ENCODE measurements at regions of chr14 and their contacts with region 1.

Region 1: GRCh38 chr14:32560209-32560857 is 231.2 kb downstream of the AKAP6 start:
- DNase-seq: peak; percentile 54
- ATAC-seq: peak; percentile 95
- H3K4me3 ChIP-seq: no peak overlapping the region
- H3K27ac ChIP-seq: no peak overlapping the region
- H3K4me1 ChIP-seq: no peaks in the 10 kb centered on the region
- H3K27me3 ChIP-seq: no peaks in the 10 kb centered on the region
- CTCF ChIP-seq: peak; percentile 35 to 97 (median 87); a peak in 5 of 6 replicates
- POLR2A ChIP-seq: no peak
- RAD21 ChIP-seq: peak; percentile 77

Region 2: GRCh38 chr14:31510222-31510621 is 1050.1 kb before region 1 on chr14:
- CTCF ChIA-PET with region 1: interaction called, 11 read pairs
- POLR2A ChIA-PET with region 1: no interaction called
- RAD21 ChIA-PET with region 1: no interaction called
- intact Hi-C with region 1: loop called (anchors 2 kb)
- DNase-seq: peak; percentile 27
- ATAC-seq: peak; percentile 55
- H3K4me3 ChIP-seq: no peak overlapping the region
- H3K27ac ChIP-seq: no peak overlapping the region
- H3K4me1 ChIP-seq: no peaks in the 10 kb centered on the region
- H3K27me3 ChIP-seq: no peaks in the 10 kb centered on the region
- CTCF ChIP-seq: peak; percentile 27 to 80 (median 67); a peak in 5 of 6 replicates
- POLR2A ChIP-seq: no peak
- RAD21 ChIP-seq: peak; percentile 76

Region 3: DNA sequence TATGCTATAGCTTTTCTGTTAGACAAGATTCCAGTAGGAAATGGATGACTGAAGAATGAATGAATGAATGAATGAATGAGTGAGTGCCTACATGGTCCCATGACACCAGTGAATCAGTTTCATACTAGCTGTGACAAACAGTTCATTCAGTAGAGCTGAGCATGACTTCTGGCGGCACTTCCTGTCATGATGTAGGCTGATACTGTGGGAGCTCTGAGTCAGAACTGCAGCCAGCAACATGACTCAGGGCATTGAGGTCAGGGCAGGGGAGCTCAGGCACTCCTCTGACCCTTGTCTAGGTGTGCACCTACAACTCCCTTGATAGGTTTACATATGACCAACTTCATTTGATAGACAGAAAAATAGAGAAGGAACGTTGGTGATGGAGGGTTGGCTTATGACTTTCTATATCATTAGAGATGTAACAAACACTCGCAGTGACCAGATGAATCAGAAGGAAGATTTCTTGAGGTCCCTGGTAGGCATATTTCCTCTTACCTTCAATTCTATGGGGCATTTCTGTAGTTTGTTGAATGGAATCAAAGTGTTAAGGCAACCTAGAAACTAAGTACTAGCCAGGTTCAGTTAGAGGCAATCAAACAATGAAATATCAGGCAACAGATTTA is 622.5 kb before region 1 on chr14:
- CTCF ChIA-PET with region 1: interaction called, 6 read pairs
- POLR2A ChIA-PET with region 1: no interaction called
- RAD21 ChIA-PET with region 1: no interaction called
- intact Hi-C with region 1: loop called (anchors 2 kb)
- DNase-seq: peak; percentile 91
- ATAC-seq: peak; percentile 91
- H3K4me3 ChIP-seq: no peak overlapping the region
- H3K27ac ChIP-seq: no peak overlapping the region
- H3K4me1 ChIP-seq: peaks cover 30 to 50% of the 10 kb centered on the region in 2 experiments
- H3K27me3 ChIP-seq: no peaks in the 10 kb centered on the region
- CTCF ChIP-seq: no peak
- POLR2A ChIP-seq: no peak
- RAD21 ChIP-seq: peak; percentile 13; the same call in 1 of the 2 replicates

Region 4: DNA sequence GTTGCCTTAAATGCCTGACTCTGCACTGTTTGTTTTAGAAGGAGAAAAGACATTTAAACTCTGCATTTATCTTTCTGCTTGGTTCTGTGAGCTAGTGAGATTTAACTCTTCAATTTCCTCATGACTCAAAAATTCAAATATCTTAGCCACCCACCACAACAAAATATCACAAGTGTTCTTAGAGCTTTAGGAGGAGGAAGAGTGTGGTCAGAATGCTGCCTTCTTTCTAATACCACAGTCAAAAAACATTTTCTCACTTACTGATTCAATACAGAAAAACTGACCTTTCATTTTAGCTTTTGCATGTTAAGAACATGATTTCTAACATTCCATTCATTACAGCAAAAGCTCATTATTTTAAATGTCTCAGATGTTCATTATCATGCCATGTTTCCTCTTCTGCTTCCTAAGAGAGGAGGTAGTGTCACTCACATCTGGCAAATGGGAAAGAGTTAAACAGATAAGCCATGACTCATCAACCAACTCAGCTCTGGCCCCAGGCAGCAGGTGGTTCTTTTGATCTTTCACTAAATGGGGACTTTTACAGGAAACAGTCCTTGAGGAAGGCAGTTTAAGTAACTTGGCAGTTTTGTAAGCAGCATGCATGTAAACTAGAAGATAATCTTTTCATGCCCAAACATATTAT is 300.8 kb before region 1 on chr14:
- CTCF ChIA-PET with region 1: interaction called, 15 read pairs
- POLR2A ChIA-PET with region 1: no interaction called
- RAD21 ChIA-PET with region 1: interaction called, 3 to 6 read pairs
- intact Hi-C with region 1: loop called (anchors 2 kb)
- DNase-seq: peak; percentile 56
- ATAC-seq: peak; percentile 66
- H3K4me3 ChIP-seq: no peak overlapping the region
- H3K27ac ChIP-seq: no peak overlapping the region
- H3K4me1 ChIP-seq: peaks cover 11 to 21% of the 10 kb centered on the region in 2 experiments; a peak in 3 of 4 replicates
- H3K27me3 ChIP-seq: no peaks in the 10 kb centered on the region
- CTCF ChIP-seq: no peak
- POLR2A ChIP-seq: no peak
- RAD21 ChIP-seq: peak; percentile 12; the same call in 1 of the 2 replicates

Region 5: GRCh38 chr14:32469388-32470160 is 90.8 kb before region 1 on chr14:
- CTCF ChIA-PET with region 1: interaction called, 7 read pairs
- POLR2A ChIA-PET with region 1: no interaction called
- RAD21 ChIA-PET with region 1: no interaction called
- intact Hi-C with region 1: loop called (anchors 5 kb)
- DNase-seq: peak; percentile 26
- ATAC-seq: no peak; the same call in 1 of the 2 replicates
- H3K4me3 ChIP-seq: no peak overlapping the region
- H3K27ac ChIP-seq: no peak overlapping the region
- H3K4me1 ChIP-seq: no peaks in the 10 kb centered on the region
- H3K27me3 ChIP-seq: no peaks in the 10 kb centered on the region
- CTCF ChIP-seq: peak; percentile 20 to 64 (median 42); a peak in 5 of 6 replicates
- POLR2A ChIP-seq: no peak
- RAD21 ChIP-seq: peak; percentile 64

Region 6: GRCh38 chr14:32950584-32950983 is 390.3 kb after region 1 on chr14:
- CTCF ChIA-PET with region 1: no interaction called
- POLR2A ChIA-PET with region 1: no interaction called
- RAD21 ChIA-PET with region 1: no interaction called
- intact Hi-C with region 1: no loop called
- DNase-seq: no peak
- ATAC-seq: no peak
- H3K4me3 ChIP-seq: no peak overlapping the region
- H3K27ac ChIP-seq: no peak overlapping the region
- H3K4me1 ChIP-seq: no peaks in the 10 kb centered on the region
- H3K27me3 ChIP-seq: no peaks in the 10 kb centered on the region
- CTCF ChIP-seq: no peak
- POLR2A ChIP-seq: no peak
- RAD21 ChIP-seq: no peak

Measured in HCT116 (cell line).